GM12878 (cell line): ENCODE measurements at regions of chr1 and their contacts with region 1.

Region 1: DNA sequence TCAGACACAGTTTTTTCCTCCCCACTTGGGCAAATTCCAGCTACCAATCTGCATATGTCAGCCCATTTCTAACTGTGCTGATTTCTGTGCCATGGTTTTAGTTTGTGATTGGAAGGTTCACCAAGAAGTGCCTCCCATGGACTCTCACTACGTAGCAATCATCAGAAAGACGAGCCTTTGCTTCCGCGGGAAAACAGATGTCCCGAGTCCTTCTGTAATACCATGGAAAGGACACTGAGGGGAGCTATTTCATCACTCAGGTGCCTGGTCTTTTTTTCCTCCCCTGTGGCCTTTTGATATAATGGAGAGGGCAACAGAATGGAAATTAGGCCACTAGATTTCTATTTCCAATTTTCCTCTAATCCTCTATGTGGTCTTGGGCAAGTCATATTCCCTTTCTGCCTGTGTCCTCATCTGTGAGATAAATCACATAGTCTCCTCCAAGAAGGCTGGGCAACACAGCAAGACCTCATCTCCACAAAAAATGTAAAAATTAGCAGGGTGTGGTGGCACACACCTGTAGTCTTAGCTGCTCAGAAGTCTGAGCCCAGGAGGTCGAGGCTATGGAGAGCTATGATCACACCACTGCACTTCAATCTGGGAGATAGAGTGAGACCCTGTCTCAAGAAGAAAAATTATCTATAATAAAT is 24.8 kb downstream of the LEMD1 start:
- DNase-seq: peak; percentile 8
- ATAC-seq: peak; percentile 65
- H3K4me3 ChIP-seq: no peak overlapping the region
- H3K27ac ChIP-seq: no peak overlapping the region
- H3K4me1 ChIP-seq: no peaks in the 10 kb centered on the region
- H3K27me3 ChIP-seq: no peaks in the 10 kb centered on the region
- CTCF ChIP-seq: peak; percentile 62 to 65 (median 65)
- EP300 ChIP-seq: no peak
- POLR2A ChIP-seq: no peak
- RAD21 ChIP-seq: peak; percentile 85

Region 2: DNA sequence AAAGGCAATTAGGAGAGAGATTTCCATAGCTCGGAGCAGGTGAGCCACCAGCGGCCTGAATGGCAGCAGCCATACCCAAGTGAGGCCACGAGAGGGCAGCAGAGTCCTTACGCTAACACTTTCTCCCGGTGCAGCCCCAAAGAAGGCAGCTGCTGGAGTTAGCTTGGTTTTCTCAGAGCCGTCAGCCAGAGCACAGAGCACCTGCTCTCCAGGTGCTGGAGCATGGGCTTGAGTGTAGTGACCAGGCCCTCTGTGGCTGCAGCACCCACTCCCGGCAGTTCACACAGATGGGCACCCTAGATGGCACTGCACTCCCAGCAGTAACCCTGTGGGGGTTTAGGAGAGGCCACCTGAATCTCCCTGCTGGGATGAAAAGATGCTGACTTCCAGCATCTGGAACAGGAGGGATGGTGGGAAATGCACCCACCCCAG is 123.5 kb before region 1 on chr1:
- CTCF ChIA-PET with region 1: interaction called, 13 read pairs
- POLR2A ChIA-PET with region 1: no interaction called
- RAD21 ChIA-PET with region 1: interaction called, 17 read pairs
- SMC1A ChIA-PET with region 1: interaction called, 14 read pairs
- in situ Hi-C with region 1: no loop called
- intact Hi-C with region 1: no loop called
- DNase-seq: peak; percentile 32
- ATAC-seq: peak; percentile 90
- H3K4me3 ChIP-seq: no peak overlapping the region
- H3K27ac ChIP-seq: no peak overlapping the region
- H3K4me1 ChIP-seq: peaks cover 3% of the 10 kb centered on the region; the same call in 1 of the 2 replicates
- H3K27me3 ChIP-seq: peaks cover 0 to 2% of the 10 kb centered on the region in 2 experiments; a peak in 1 of 4 replicates
- CTCF ChIP-seq: peak; percentile 92 to 98 (median 98)
- EP300 ChIP-seq: peak in 1 of 2 experiments; percentile 38; a peak in 1 of 4 replicates
- POLR2A ChIP-seq: no peak
- RAD21 ChIP-seq: peak; percentile 96

Region 3: GRCh38 chr1:205354259-205354904 is 42.7 kb before region 1 on chr1:
- CTCF ChIA-PET with region 1: interaction called, 22 read pairs
- POLR2A ChIA-PET with region 1: no interaction called
- RAD21 ChIA-PET with region 1: interaction called, 4 read pairs
- SMC1A ChIA-PET with region 1: interaction called, 10 read pairs
- in situ Hi-C with region 1: no loop called
- intact Hi-C with region 1: no loop called
- DNase-seq: peak; percentile 9
- ATAC-seq: peak; percentile 91
- H3K4me3 ChIP-seq: no peak overlapping the region
- H3K27ac ChIP-seq: no peak overlapping the region
- H3K4me1 ChIP-seq: no peaks in the 10 kb centered on the region
- H3K27me3 ChIP-seq: peaks cover 0 to 4% of the 10 kb centered on the region in 2 experiments; a peak in 3 of 4 replicates
- CTCF ChIP-seq: peak; percentile 74 to 83 (median 83)
- EP300 ChIP-seq: no peak
- POLR2A ChIP-seq: no peak
- RAD21 ChIP-seq: peak; percentile 69

Region 4: GRCh38 chr1:205416322-205416721 is 19.2 kb after region 1 on chr1:
- CTCF ChIA-PET with region 1: interaction called, 13 read pairs
- POLR2A ChIA-PET with region 1: no interaction called
- RAD21 ChIA-PET with region 1: interaction called, 3 read pairs
- SMC1A ChIA-PET with region 1: interaction called, 8 read pairs
- in situ Hi-C with region 1: no loop called
- intact Hi-C with region 1: no loop called
- DNase-seq: no peak
- ATAC-seq: no peak
- H3K4me3 ChIP-seq: no peak overlapping the region
- H3K27ac ChIP-seq: no peak overlapping the region
- H3K4me1 ChIP-seq: no peaks in the 10 kb centered on the region
- H3K27me3 ChIP-seq: peaks cover 0 to 6% of the 10 kb centered on the region in 2 experiments; a peak in 3 of 4 replicates
- CTCF ChIP-seq: no peak
- EP300 ChIP-seq: no peak
- POLR2A ChIP-seq: no peak
- RAD21 ChIP-seq: no peak

Region 5: GRCh38 chr1:205430696-205431305 is 33.7 kb after region 1 on chr1:
- CTCF ChIA-PET with region 1: interaction called, 35 read pairs
- POLR2A ChIA-PET with region 1: interaction called, 4 read pairs
- RAD21 ChIA-PET with region 1: interaction called, 21 read pairs
- SMC1A ChIA-PET with region 1: interaction called, 39 read pairs
- in situ Hi-C with region 1: no loop called
- intact Hi-C with region 1: no loop called
- DNase-seq: peak; percentile 13
- ATAC-seq: peak; percentile 85
- H3K4me3 ChIP-seq: peak overlapping the region; percentile 54; the same call in 1 of the 2 replicates
- H3K27ac ChIP-seq: no peak overlapping the region
- H3K4me1 ChIP-seq: peaks cover 3% of the 10 kb centered on the region
- H3K27me3 ChIP-seq: peaks cover 3 to 4% of the 10 kb centered on the region in 2 experiments; a peak in 2 of 4 replicates
- CTCF ChIP-seq: peak; percentile 53 to 85 (median 72)
- EP300 ChIP-seq: peak in 1 of 2 experiments; percentile 38; a peak in 1 of 4 replicates
- POLR2A ChIP-seq: no peak
- RAD21 ChIP-seq: peak; percentile 45

Region 6: GRCh38 chr1:205449750-205450443 is 52.8 kb after region 1 on chr1:
- CTCF ChIA-PET with region 1: interaction called, 17 read pairs
- POLR2A ChIA-PET with region 1: no interaction called
- RAD21 ChIA-PET with region 1: interaction called, 3 read pairs
- SMC1A ChIA-PET with region 1: interaction called, 3 read pairs
- in situ Hi-C with region 1: no loop called
- intact Hi-C with region 1: no loop called
- DNase-seq: no peak
- ATAC-seq: peak; percentile 89
- H3K4me3 ChIP-seq: no peak overlapping the region
- H3K27ac ChIP-seq: no peak overlapping the region
- H3K4me1 ChIP-seq: peaks cover 5% of the 10 kb centered on the region; the same call in 1 of the 2 replicates
- H3K27me3 ChIP-seq: peaks cover 3 to 5% of the 10 kb centered on the region in 2 experiments; a peak in 3 of 4 replicates
- CTCF ChIP-seq: no peak
- EP300 ChIP-seq: no peak
- POLR2A ChIP-seq: no peak
- RAD21 ChIP-seq: no peak

Region 7: GRCh38 chr1:205493241-205494085 is 96.4 kb after region 1 on chr1:
- CTCF ChIA-PET with region 1: interaction called, 420 read pairs
- POLR2A ChIA-PET with region 1: no interaction called
- RAD21 ChIA-PET with region 1: interaction called, 214 read pairs
- SMC1A ChIA-PET with region 1: interaction called, 244 read pairs
- in situ Hi-C with region 1: loop called (anchors 5 kb)
- intact Hi-C with region 1: no loop called
- DNase-seq: no peak
- ATAC-seq: peak; percentile 67
- H3K4me3 ChIP-seq: no peak overlapping the region
- H3K27ac ChIP-seq: no peak overlapping the region
- H3K4me1 ChIP-seq: no peaks in the 10 kb centered on the region
- H3K27me3 ChIP-seq: peaks cover 4% of the 10 kb centered on the region in 2 experiments; a peak in 3 of 4 replicates
- CTCF ChIP-seq: no peak
- EP300 ChIP-seq: no peak
- POLR2A ChIP-seq: no peak
- RAD21 ChIP-seq: no peak